GM12878 (cell line): ENCODE measurements at regions of chr13 and their contacts with region 1.

Region 1: GRCh38 chr13:45863709-45864590 is 12.4 kb upstream of the SIAH3 start:
- DNase-seq: no peak
- ATAC-seq: no peak
- H3K4me3 ChIP-seq: no peak overlapping the region
- H3K27ac ChIP-seq: no peak overlapping the region
- H3K4me1 ChIP-seq: no peaks in the 10 kb centered on the region
- H3K27me3 ChIP-seq: peaks cover 3 to 10% of the 10 kb centered on the region in 2 experiments
- CTCF ChIP-seq: no peak
- EP300 ChIP-seq: no peak
- POLR2A ChIP-seq: no peak
- RAD21 ChIP-seq: no peak

Region 2: GRCh38 chr13:45521297-45521696 is 342.7 kb before region 1 on chr13:
- CTCF ChIA-PET with region 1: no interaction called
- POLR2A ChIA-PET with region 1: no interaction called
- RAD21 ChIA-PET with region 1: no interaction called
- SMC1A ChIA-PET with region 1: no interaction called
- in situ Hi-C with region 1: no loop called
- intact Hi-C with region 1: no loop called
- DNase-seq: no peak
- ATAC-seq: no peak
- H3K4me3 ChIP-seq: no peak overlapping the region
- H3K27ac ChIP-seq: no peak overlapping the region
- H3K4me1 ChIP-seq: no peaks in the 10 kb centered on the region
- H3K27me3 ChIP-seq: no peaks in the 10 kb centered on the region
- CTCF ChIP-seq: no peak
- EP300 ChIP-seq: no peak
- POLR2A ChIP-seq: no peak
- RAD21 ChIP-seq: no peak

Region 3: DNA sequence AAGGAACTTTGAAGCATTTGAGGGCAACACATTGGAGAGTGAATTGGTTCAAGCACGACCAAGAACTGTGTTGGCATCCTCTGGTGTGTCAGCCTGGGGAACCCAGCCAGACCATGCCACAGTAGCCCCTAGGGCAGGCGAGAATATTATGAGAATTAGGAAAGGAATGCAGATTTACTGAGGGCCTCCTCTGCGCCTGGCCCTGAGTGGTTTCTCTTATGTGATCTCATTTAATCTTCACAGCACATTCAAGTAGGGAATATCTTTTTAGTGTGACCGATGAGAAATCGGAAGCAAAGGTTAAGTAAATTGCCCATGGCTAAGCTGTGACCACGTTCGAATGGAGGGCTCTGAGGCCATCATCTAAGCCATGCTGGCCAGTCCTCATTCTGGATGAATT is 233.1 kb before region 1 on chr13:
- CTCF ChIA-PET with region 1: no interaction called
- POLR2A ChIA-PET with region 1: no interaction called
- RAD21 ChIA-PET with region 1: no interaction called
- SMC1A ChIA-PET with region 1: no interaction called
- in situ Hi-C with region 1: no loop called
- intact Hi-C with region 1: loop called (anchors 10 kb)
- DNase-seq: no peak
- ATAC-seq: no peak
- H3K4me3 ChIP-seq: no peak overlapping the region
- H3K27ac ChIP-seq: no peak overlapping the region
- H3K4me1 ChIP-seq: peaks cover 5% of the 10 kb centered on the region
- H3K27me3 ChIP-seq: no peaks in the 10 kb centered on the region
- CTCF ChIP-seq: no peak
- EP300 ChIP-seq: no peak
- POLR2A ChIP-seq: no peak
- RAD21 ChIP-seq: no peak

Region 4: DNA sequence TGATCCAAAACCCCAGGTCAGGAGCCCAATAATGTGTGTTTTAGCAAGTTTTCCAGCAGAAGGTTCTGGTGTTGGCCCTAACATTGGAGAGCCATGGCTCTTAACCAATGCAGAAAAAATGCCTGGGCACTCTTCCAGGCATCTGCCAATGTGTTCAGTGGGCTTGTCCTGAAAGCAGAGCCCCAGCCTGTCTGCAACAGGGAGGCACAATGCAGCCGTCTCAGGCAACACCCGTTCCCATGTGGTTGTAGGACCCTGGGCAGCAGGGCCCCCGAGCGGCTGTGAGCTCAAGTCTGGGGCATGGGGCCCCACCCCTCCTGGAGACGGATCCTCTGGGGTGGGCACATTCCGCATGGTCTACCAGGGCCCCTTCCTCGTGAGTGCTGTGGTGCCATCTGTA is 45.7 kb after region 1 on chr13:
- CTCF ChIA-PET with region 1: no interaction called
- POLR2A ChIA-PET with region 1: no interaction called
- RAD21 ChIA-PET with region 1: no interaction called
- SMC1A ChIA-PET with region 1: no interaction called
- in situ Hi-C with region 1: no loop called
- intact Hi-C with region 1: no loop called
- DNase-seq: no peak
- ATAC-seq: no peak
- H3K4me3 ChIP-seq: no peak overlapping the region
- H3K27ac ChIP-seq: no peak overlapping the region
- H3K4me1 ChIP-seq: no peaks in the 10 kb centered on the region
- H3K27me3 ChIP-seq: peaks cover 0 to 2% of the 10 kb centered on the region in 2 experiments; a peak in 1 of 4 replicates
- CTCF ChIP-seq: no peak
- EP300 ChIP-seq: no peak
- POLR2A ChIP-seq: no peak
- RAD21 ChIP-seq: no peak